ENCODE measurements at regions of chrX and their contacts with region 1.

Region 1: DNA sequence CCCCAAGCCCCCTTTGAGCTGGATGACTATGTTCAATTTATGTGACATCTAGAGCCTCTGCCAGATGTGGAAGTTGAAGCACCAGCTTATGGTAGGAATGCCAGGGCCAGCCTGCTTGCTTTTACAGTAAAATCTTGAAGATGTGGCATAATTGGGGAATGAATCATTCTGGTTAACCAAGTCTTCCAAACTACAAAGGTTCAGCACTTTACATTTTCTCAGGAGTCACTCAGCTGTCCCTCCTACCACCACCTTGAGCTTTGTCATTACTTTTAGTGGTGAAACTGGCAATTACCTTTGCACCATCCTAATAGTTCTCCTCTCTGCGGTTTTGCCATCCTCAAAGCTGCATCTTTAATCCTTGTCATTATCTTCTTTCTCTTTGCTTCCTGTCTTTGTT is 172.2 kb downstream of the HS6ST2 start:
- DNase-seq: no peak
- H3K27ac ChIP-seq: no peak overlapping the region
- CTCF ChIP-seq: no peak

Region 2: DNA sequence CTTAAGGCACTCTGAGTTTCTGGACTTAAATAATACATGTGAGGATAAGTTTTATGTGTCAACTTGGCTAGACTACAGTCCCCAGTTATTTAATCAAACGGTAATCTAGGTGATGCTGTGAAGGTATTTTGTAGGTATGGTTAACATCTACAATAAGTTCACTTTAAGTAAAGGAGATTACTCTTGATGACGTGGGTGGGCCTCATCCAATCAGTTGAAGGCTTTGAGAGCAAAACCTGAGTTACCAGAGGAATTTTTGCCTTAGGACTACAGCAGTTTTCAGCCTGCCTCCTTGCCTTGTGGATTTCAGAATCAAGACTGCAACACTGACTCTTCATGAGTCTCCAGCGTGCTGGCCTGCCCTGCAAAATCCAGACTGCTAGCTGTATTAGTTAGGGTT is 232.0 kb after region 1 on chrX:
- CTCF ChIA-PET with region 1: no interaction called
- POLR2A ChIA-PET with region 1: no interaction called
- DNase-seq: no peak
- H3K27ac ChIP-seq: no peak overlapping the region
- CTCF ChIP-seq: no peak

Region 3: GRCh38 chrX:134101636-134102035 is 1315.4 kb after region 1 on chrX:
- CTCF ChIA-PET with region 1: no interaction called
- POLR2A ChIA-PET with region 1: interaction called, 11 read pairs
- DNase-seq: no peak
- H3K27ac ChIP-seq: no peak overlapping the region
- CTCF ChIP-seq: no peak